ENCODE measurements at regions of chr22 and their contacts with region 1.

Region 1: GRCh38 chr22:18077639-18078328 is at the start of gene PEX26:
- DNase-seq: peak; percentile 93
- ATAC-seq: peak; percentile 99
- H3K4me3 Mint-ChIP-seq: peak within 1 kb of the TSS; percentile 97
- H3K27ac Mint-ChIP-seq: peak within 1 kb of the TSS; percentile 97
- H3K4me1 Mint-ChIP-seq: peaks cover 16% of the 10 kb centered on the region
- H3K27me3 Mint-ChIP-seq: no peaks in the 10 kb centered on the region
- CTCF ChIP-seq: no peak
- total RNA-seq, gene PEX26: 43.0 to 52.3 TPM (median 44.8 TPM) in 3 replicates

Region 2: DNA sequence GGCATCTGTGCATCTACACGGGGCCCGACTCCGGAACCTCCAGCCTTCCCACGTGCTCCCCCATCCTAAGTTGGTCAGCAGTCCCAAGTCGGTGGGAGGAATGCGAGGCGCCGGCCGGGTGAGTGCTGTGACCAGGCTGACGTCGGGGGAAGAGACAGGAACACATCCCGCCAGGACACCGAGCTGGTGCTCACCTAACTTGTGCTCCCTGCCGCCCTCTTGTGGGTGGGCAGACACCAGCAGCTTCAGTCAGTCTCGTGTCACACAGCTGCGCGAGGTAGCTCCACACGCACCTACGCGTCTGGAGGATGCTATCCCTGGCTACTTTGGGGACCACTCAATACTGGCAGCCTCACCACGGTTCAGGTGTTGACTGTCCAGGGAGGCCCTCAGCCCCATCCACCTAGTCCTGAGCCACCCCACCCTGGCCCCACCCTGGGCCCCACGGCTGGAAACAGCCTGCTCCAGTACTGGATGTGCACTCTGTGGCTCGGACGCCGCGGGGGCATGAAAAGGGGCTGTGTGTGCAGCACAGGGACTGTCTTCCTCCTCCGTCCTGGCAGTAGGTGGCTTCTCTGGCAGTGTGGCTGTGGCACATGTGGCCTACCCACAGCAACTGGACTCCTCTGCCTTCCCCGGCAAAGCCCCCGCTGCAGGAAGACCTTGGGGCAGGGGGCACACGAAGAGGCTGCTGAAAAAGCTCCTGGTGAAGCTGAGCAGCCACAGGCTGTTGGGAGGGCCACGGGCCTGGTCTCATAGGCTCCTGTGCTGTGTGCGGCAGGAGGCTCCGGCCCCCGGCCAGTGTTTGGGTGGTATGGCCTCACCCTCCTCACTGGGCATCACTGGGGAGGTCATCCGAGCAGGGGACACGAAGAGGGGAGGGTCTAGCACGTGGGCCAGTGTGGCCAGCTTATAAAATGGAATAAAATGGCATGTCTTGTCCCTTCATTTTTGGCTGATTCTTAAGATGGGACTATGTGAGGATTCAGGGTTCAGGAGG is 292.3 kb before region 1 on chr22:
- CTCF ChIA-PET with region 1: interaction called, 37 read pairs
- POLR2A ChIA-PET with region 1: no interaction called
- DNase-seq: peak; percentile 95
- ATAC-seq: peak; percentile 82
- H3K4me3 Mint-ChIP-seq: no peak overlapping the region
- H3K27ac Mint-ChIP-seq: no peak overlapping the region
- H3K4me1 Mint-ChIP-seq: peaks cover 10% of the 10 kb centered on the region
- H3K27me3 Mint-ChIP-seq: no peaks in the 10 kb centered on the region; the same call in 1 of the 2 replicates
- CTCF ChIP-seq: peak; percentile 65; the same call in 1 of the 2 replicates

Region 3: DNA sequence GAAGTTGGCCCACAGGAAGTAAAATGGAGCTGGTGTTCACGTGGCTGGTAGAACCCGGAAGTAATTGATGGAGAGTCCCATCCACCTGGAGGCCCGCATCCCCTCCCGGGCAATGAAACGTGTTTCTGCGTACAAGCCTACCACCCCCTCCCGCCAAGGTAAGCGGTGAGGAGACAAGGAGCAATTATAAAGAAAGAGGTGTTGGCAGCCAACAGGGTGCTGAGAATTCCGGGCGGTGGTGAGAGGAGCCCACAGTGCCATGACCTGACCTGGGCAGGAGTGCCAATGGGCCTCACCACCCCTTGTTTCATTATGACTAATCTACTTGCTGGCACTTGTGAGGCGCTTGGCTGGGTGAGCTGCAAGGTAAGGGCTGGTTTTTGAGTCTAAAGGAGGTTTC is 219.8 kb before region 1 on chr22:
- CTCF ChIA-PET with region 1: interaction called, 13 read pairs
- POLR2A ChIA-PET with region 1: no interaction called
- DNase-seq: no peak
- ATAC-seq: no peak
- H3K4me3 Mint-ChIP-seq: no peak overlapping the region
- H3K27ac Mint-ChIP-seq: no peak overlapping the region
- H3K4me1 Mint-ChIP-seq: 0 out of 2 replicates have a peak, but pooled peaks cover 3% of the 10 kb centered on the region
- H3K27me3 Mint-ChIP-seq: no peaks in the 10 kb centered on the region; the same call in 1 of the 2 replicates
- CTCF ChIP-seq: no peak

Region 4: DNA sequence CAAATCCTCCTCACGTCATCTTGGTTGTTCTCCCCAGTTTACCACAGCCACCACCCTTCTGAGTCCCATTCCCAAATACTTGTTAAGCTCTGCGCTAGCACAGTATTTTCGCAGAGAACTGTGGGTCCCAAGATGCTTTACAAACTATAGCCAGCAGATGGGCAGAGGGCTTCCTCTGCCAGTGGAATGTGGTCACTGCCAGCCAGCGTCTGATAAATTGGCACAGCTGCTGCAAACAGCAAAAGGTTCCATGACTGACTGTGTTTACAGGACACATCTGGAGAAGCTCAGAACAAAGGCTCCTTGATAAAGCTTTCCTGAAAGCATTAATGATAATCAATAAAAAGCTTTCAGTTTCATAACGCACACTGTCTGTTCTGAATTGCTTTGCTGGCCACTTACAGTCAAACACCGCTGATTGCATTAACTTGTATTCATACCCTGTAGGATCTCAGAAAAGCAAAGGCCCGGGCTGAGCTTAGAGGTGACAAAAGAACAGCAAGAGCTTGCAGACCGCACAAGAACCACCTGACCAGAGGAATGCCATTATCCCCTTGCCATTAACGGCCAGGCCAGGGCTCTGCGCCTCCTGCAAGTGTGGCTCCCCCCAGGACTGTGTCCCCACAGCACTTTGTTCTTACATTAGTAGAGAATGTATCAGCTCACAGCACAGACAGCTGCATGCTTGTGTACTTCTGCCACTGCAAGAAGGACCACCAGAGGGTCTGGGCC is 174.1 kb before region 1 on chr22:
- CTCF ChIA-PET with region 1: interaction called, 21 read pairs
- POLR2A ChIA-PET with region 1: no interaction called
- DNase-seq: peak; percentile 31
- ATAC-seq: peak; percentile 87
- H3K4me3 Mint-ChIP-seq: no peak overlapping the region
- H3K27ac Mint-ChIP-seq: 0 out of 2 replicates have a peak overlapping the region, but pooled peaks have one; percentile 38
- H3K4me1 Mint-ChIP-seq: peaks cover 8% of the 10 kb centered on the region; the same call in 1 of the 2 replicates
- H3K27me3 Mint-ChIP-seq: no peaks in the 10 kb centered on the region
- CTCF ChIP-seq: no peak

Region 5: GRCh38 chr22:18024276-18024947 is 53.4 kb before region 1 on chr22 and contains the start of gene MICAL3:
- CTCF ChIA-PET with region 1: interaction called, 11 read pairs
- POLR2A ChIA-PET with region 1: no interaction called
- DNase-seq: peak; percentile 38
- ATAC-seq: peak; percentile 55
- H3K4me3 Mint-ChIP-seq: peak within 1 kb of the TSS; percentile 91
- H3K27ac Mint-ChIP-seq: no peak within 1 kb of the TSS
- H3K4me1 Mint-ChIP-seq: peaks cover 16% of the 10 kb centered on the region
- H3K27me3 Mint-ChIP-seq: peaks cover 73% of the 10 kb centered on the region
- CTCF ChIP-seq: no peak; the same call in 1 of the 2 replicates
- total RNA-seq, gene MICAL3: 35.6 to 41.2 TPM (median 38.8 TPM) in 3 replicates

Region 6: DNA sequence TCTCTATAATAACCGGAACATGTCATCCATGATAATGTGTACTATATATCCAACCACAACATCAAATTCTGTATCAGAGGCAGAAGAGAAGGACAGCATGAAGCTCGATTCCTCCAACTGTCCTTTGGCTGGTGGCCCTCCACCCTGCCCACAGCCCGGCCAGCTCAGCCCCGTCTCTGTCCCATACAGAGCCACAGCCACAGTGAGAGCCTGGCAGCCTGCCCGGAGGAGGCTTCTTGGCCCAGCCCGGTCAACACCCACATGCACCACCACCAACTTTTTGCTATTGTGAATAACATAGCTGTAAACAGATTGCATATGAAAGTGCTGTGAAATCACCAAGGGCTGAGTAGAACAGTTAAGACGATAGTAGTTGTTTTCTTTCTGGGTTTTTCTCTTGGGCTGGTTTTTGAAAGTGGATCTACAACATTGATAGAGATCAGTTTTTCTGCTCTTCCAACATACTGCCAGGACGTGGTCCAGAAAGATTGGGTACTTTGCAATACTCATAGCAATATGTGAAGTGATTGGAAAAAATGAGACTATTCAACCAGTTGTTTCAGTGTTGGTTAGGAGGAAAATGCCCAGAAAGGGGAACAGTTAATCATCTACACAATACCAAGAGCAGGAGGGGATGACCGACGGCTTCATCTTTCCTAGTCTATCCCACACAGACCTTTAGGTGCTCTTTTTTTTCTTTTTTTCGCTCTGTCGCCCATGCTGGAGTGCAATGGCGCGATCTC is 25.9 kb after region 1 on chr22:
- CTCF ChIA-PET with region 1: no interaction called
- POLR2A ChIA-PET with region 1: no interaction called
- DNase-seq: no peak
- ATAC-seq: no peak
- H3K4me3 Mint-ChIP-seq: no peak overlapping the region
- H3K27ac Mint-ChIP-seq: no peak overlapping the region
- H3K4me1 Mint-ChIP-seq: no peaks in the 10 kb centered on the region
- H3K27me3 Mint-ChIP-seq: peaks cover 26% of the 10 kb centered on the region
- CTCF ChIP-seq: no peak

Region 7: GRCh38 chr22:18156850-18157713 is 79.3 kb after region 1 on chr22:
- CTCF ChIA-PET with region 1: interaction called, 10 read pairs
- POLR2A ChIA-PET with region 1: no interaction called
- DNase-seq: peak; percentile 90
- ATAC-seq: peak; percentile 93
- H3K4me3 Mint-ChIP-seq: peak overlapping the region; percentile 51
- H3K27ac Mint-ChIP-seq: no peak overlapping the region; the same call in 1 of the 2 replicates
- H3K4me1 Mint-ChIP-seq: peaks cover 28% of the 10 kb centered on the region
- H3K27me3 Mint-ChIP-seq: peaks cover 3% of the 10 kb centered on the region
- CTCF ChIP-seq: peak; percentile 69

Measured in WTC11 (cell line).